HepG2 (cell line): ENCODE measurements at regions of chr12 and their contacts with region 1.

Region 1: DNA sequence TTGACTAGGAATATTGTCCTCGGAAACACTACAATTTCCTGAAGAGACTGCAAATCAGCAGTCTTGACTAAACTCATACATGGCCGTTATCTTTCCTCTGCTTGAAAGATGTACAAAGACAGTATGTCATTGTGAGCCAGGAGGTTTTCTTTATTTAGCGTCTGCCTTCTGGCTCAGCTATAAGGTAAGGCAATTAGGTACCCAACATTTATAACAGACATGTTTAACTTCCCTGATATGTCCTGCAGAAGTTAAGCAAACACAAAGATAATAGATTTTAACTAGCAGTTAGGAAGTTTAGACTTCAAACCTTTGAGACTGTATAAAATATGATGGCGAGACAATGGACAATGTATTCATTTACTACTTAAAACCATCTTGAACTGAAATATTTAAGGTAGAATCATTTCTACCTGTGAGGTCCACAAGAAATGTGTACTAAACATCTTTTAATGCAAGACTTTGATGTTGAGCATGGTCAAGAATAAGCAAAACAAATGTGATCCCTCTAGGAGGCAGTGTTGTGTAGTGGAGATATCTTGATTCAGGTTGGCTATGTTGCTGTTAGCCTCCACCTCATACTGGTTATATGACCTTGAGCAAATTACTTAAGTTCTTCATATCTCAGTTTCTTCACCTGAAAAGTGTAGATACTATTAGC is 96.2 kb upstream of the EEA1 start:
- DNase-seq: no peak
- ATAC-seq: peak; percentile 58
- H3K4me3 ChIP-seq: no peak overlapping the region
- H3K27ac ChIP-seq: no peak overlapping the region
- H3K4me1 ChIP-seq: peaks cover 55% of the 10 kb centered on the region
- H3K27me3 ChIP-seq: no peaks in the 10 kb centered on the region
- CTCF ChIP-seq: peak; percentile 76
- EP300 ChIP-seq: peak in 1 of 2 experiments; percentile 9; a peak in 1 of 4 replicates
- POLR2A ChIP-seq: no peak
- RAD21 ChIP-seq: peak; percentile 72

Region 2: DNA sequence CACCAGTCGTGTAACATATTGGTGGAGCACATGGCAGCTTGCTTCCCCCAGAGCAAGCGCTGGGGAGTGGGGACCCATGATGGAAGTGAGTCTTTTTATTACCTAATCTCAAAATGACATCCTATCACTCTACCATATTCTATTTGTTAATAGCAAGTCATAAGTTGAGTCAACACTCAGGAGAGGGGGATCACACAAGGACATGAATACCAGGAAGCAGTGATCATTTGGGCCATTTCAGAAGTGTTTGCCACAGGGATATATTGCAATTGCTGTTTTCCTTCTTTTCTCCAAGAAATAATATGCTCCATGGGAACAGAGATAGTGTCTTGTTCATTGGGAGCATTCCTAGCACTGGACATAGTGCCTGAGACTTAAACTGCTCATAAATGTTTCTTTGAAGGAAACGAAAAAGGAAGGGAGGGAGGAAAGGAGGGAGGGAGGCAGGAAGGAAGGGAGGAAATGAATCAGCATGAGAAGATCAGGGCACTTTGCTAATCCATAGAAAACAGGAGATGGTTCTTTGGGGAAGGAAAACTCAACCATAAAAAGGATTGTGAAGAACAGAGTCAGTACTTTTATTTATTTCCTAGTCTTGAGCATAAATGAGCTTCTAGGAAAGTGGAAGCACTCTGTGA is 57.0 kb before region 1 on chr12:
- CTCF ChIA-PET with region 1: no interaction called
- POLR2A ChIA-PET with region 1: no interaction called
- in situ Hi-C with region 1: no loop called
- intact Hi-C with region 1: no loop called
- DNase-seq: no peak
- ATAC-seq: no peak
- H3K4me3 ChIP-seq: no peak overlapping the region
- H3K27ac ChIP-seq: no peak overlapping the region
- H3K4me1 ChIP-seq: peaks cover 64% of the 10 kb centered on the region
- H3K27me3 ChIP-seq: no peaks in the 10 kb centered on the region
- CTCF ChIP-seq: no peak
- EP300 ChIP-seq: no peak
- POLR2A ChIP-seq: no peak
- RAD21 ChIP-seq: no peak

Region 3: GRCh38 chr12:93397412-93397811 is 372.1 kb after region 1 on chr12:
- CTCF ChIA-PET with region 1: interaction called, 3 read pairs
- POLR2A ChIA-PET with region 1: no interaction called
- in situ Hi-C with region 1: no loop called
- intact Hi-C with region 1: loop called (anchors 2 kb)
- DNase-seq: no peak
- ATAC-seq: no peak
- H3K4me3 ChIP-seq: no peak overlapping the region
- H3K27ac ChIP-seq: no peak overlapping the region
- H3K4me1 ChIP-seq: peaks cover 16% of the 10 kb centered on the region
- H3K27me3 ChIP-seq: no peaks in the 10 kb centered on the region
- CTCF ChIP-seq: no peak
- EP300 ChIP-seq: no peak
- POLR2A ChIP-seq: no peak
- RAD21 ChIP-seq: no peak